ENCODE measurements at regions of chr7 and their contacts with region 1.

Region 1: DNA sequence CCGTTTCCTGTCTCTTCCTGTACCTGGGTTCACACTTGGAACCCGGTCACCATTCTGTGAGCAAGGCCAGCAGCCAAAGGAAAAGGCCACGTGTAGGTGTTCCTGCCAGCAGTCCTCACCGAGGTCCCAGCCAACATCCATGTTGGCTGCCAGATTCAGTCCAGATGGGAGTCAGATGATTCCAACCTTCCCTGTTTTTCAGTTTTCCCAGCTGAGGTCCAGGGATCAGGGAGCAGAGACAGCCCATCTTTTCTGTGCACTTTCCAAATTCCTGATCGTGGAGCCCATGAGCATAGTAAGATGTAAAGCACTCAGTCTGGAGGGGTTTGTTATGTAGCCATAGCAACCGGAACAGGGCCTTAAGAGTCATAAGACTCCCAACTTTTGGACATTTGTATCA is 3.9 kb upstream of the PVRIG start:
- DNase-seq: no peak
- H3K4me3 Mint-ChIP-seq: no peak overlapping the region
- H3K27ac Mint-ChIP-seq: no peak overlapping the region
- H3K4me1 Mint-ChIP-seq: peaks cover 50% of the 10 kb centered on the region
- H3K27me3 Mint-ChIP-seq: no peaks in the 10 kb centered on the region

Region 2: DNA sequence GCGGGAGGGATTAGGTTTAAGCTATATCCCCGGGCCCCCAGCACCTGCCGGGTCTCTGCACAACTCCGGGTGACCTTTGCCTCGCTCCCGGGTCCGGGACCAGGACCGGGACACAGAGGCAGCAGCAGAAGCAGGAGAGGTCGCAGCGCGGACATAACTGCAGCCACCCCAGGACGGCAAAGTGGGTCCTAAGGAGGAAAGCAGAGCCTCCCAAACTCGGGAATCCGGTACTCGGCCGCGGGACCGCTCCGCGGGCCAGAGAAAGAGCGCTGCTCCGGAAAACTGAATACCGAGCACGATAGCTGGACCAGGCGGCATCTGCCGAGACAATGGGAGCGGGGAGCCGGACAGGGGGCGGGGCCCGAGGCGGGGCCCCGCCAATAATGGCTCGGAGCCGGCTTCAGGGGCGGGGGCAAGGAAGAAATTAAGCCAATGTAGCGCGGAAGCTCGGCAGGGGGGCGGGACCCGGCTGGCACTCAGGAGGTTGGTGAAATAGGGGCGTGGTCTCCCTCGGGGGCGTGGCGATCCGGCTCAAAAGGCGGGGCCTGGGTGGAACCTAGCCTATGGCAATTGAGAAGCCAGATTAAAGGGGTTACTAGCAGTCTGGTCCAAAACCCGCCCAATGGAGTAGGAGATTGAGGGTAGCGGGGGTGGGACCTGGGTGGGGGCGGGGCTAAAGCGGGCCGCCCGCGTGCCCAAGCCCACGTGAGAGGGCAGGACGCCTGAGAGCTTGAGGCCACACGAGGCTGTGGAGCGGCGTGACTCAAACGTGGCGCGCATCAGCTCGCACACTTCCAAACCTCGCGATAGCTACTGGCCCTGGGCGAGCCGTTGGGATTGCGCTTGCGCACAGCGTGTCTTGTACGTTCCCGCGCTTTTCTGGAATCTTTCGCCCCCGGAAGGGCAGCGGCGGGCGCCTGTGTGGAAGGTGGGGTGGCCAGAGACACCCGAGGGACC is 38.6 kb before region 1 on chr7 and contains the starts of genes GPC2 and STAG3:
- CTCF ChIA-PET with region 1: interaction called, 14 read pairs
- POLR2A ChIA-PET with region 1: interaction called, 4 read pairs
- DNase-seq: peak; percentile 98
- H3K4me3 Mint-ChIP-seq: peak within 1 kb of the TSS; percentile 67
- H3K27ac Mint-ChIP-seq: peak within 1 kb of the TSS; percentile 21
- H3K4me1 Mint-ChIP-seq: peaks cover 39% of the 10 kb centered on the region
- H3K27me3 Mint-ChIP-seq: peaks cover 23% of the 10 kb centered on the region
- total RNA-seq, gene GPC2: 3.8 to 4.8 TPM
- total RNA-seq, gene STAG3: 12.9 to 13.1 TPM

Region 3: DNA sequence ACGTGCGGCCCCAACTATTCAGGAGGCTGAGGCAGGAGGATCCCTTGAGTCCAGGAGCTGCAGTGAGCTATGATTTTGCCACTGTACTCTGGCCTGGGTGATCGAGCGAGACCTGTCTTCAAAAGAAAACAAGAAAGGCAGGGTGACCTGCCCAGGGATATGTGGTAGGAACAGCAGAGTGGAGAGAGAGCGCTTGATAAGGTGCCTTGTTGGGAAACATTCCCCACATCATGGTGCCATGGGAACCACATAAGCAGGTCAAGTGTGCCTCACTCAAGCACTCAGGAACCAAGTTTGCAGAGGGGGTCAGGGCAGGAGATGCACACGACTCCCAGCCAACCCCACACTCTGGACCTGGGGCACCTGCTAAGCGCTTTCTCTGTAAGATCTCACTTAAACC is 41.1 kb after region 1 on chr7:
- CTCF ChIA-PET with region 1: no interaction called
- POLR2A ChIA-PET with region 1: no interaction called
- DNase-seq: no peak
- H3K4me3 Mint-ChIP-seq: no peak overlapping the region
- H3K27ac Mint-ChIP-seq: no peak overlapping the region
- H3K4me1 Mint-ChIP-seq: no peaks in the 10 kb centered on the region
- H3K27me3 Mint-ChIP-seq: no peaks in the 10 kb centered on the region

Region 4: DNA sequence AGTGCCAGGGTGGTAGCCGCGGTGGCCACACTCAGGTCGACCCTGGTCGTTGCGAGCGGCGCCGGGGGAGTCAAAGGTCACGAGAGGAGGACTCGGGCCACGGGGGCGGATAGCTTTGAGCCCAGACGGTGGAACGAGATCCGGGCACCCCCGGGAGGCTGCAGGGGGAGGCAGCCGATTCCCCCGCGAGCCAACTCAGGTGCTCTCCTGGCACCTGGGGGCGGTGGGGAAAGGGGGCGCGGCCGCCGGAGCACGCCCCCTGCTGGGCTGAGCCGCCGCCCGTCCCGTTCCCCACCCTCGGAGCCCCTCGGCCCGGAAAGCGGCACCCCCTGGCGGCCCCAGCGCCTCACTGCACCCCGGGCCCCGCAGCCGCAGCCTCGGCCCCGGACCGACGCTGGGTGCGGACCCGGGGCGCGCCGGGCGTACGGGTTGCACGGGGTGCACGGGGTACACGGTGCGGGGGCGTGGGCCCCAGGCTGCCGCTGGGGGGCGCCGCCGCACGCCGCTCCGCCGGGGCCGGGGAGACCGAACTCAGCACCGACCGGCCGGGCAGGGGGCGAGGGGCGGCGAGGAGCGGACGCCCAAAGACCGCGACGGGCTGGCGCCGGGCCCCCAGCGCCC is 267.3 kb after region 1 on chr7:
- CTCF ChIA-PET with region 1: no interaction called
- POLR2A ChIA-PET with region 1: no interaction called
- DNase-seq: peak; percentile 81
- H3K4me3 Mint-ChIP-seq: peak overlapping the region; percentile 78
- H3K27ac Mint-ChIP-seq: no peak overlapping the region
- H3K4me1 Mint-ChIP-seq: peaks cover 15% of the 10 kb centered on the region
- H3K27me3 Mint-ChIP-seq: peaks cover 4% of the 10 kb centered on the region

Measured in activated CD4-positive, alpha-beta memory T cell treated with anti-CD3 and anti-CD28 coated beads, Interleukin-2, amount 10 ng/mL, durations not matched to agents 7 days and 5 days (primary cell).